ENCODE measurements at regions of chr12 and their contacts with region 1.

Region 1: DNA sequence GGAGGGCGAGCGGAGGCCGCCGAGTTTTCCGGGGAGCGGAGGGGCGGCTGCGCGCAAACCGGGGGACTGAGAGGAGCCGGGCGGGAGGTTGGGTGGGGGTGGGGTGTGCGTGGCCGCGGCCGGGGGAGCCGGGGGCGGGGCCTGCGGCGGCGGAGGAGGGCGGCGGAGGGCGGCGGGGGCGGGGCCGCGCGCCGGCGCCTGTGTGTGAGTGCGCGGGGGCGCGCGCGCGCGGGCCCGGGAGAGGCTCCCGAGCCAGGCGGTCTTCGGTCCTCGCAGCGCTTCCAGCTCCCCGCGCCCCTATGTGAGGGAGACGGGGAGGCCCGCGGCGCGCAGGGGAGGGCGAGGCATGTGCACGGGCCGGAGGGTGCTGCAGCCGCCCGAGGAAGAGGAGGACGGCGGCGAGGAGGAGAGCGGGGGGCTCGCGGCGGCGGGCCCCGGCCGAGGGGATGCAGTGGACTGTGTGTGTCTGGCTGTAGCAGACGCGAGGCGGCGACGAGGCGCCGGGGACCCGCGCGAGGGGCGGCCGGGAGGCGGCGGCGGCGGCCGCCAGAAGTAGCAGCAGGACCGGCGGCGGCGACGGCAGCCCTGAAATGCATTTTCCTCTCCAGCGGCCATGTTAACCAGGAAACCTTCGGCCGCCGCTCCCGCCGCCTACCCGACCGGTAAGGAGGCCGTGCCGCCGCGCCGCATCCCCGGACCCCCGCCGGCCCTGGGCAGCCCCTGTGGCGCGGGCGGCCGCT is at the start of gene DYRK2:
- DNase-seq: peak; percentile 86 to 90
- ATAC-seq: peak; percentile 62 to 75 (median 72)
- H3K4me3 ChIP-seq: peak within 1 kb of the TSS; percentile 96
- H3K27ac ChIP-seq: peak within 1 kb of the TSS; percentile 99
- H3K4me1 ChIP-seq: peaks cover 27% of the 10 kb centered on the region
- H3K27me3 ChIP-seq: no peaks in the 10 kb centered on the region
- CTCF ChIP-seq: peak; percentile 16
- total RNA-seq, gene DYRK2: 11.0 to 46.4 (median 21.5) TPM

Region 2: DNA sequence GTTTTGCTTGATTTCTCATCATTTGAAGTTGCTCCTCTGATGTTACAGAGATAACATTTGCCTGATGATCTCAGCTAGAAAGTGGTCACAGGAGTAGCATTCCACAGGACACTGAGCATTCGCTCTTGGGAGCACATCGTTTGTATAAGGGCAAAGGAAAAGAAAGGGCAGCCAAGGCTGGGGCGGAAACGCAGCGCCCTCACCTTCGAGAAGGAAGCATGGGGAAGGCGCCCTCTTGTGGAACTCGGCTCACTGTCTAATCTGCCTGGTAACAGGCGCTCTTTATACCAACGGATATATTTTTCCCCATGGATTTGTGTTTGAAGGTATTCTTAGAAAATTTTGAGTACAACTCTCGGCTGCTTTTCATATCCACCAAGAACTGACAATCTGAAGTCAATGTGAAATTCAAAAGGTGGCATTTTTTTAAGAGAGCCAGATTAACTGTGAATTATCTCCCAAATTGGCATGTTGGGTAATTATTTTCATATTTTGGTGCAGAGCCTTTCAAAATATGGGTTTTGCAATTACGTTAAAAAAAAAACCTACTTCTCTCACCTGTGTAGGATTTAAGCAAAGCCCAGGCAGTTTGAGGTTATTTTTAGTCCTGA is 206.8 kb before region 1 on chr12:
- intact Hi-C with region 1: loop called (anchors 5 to 10 kb)
- DNase-seq: peak; percentile 87 to 92
- ATAC-seq: peak; percentile 95 to 98 (median 96)
- H3K4me3 ChIP-seq: peak overlapping the region; percentile 56
- H3K27ac ChIP-seq: peak overlapping the region; percentile 84
- H3K4me1 ChIP-seq: peaks cover 10% of the 10 kb centered on the region
- H3K27me3 ChIP-seq: no peaks in the 10 kb centered on the region
- CTCF ChIP-seq: peak; percentile 82

Region 3: DNA sequence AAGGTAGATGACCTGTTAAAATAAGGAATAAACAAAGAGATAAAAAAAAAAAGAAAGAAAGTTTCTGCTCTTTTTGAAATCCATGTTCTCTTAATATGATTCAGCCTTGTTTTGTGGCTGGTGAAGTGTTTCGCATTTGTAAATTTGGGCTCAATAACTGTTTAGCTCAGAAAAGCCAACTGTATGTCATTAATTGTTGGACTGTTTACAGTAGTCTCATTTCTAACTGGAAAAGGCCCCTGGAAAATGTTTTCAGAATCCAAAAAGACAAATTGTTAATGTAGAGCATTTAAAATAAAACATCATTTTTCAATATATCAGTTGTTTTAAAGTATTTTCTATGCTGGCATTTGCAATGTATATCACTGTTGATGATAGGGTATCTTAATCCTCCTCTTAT is 47.6 kb before region 1 on chr12:
- intact Hi-C with region 1: no loop called
- DNase-seq: no peak
- ATAC-seq: no peak
- H3K4me3 ChIP-seq: no peak overlapping the region
- H3K27ac ChIP-seq: no peak overlapping the region
- H3K4me1 ChIP-seq: no peaks in the 10 kb centered on the region
- H3K27me3 ChIP-seq: no peaks in the 10 kb centered on the region
- CTCF ChIP-seq: no peak

Region 4: DNA sequence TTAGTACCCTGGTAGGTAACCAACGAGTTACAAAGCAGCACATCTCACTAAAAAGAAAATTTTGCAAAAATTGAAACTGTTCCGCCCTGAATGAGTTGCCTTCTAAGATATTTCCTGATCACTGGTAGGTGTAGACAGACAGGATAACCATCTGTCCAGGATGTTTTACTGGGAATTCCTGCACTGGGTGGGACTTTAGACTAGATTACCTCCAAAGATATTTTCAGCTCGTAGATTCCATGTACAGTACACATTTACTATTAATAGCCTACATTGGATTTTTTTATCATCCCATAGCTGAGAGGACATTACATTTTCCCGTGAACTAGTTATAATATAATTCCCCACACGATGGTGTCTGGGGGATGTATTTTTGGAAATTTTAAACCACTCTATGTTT is 139.4 kb after region 1 on chr12:
- intact Hi-C with region 1: loop called (anchors 10 kb)
- DNase-seq: no peak
- ATAC-seq: peak; percentile 81 to 92 (median 88)
- H3K4me3 ChIP-seq: peak overlapping the region; percentile 19
- H3K27ac ChIP-seq: peak overlapping the region; percentile 79
- H3K4me1 ChIP-seq: peaks cover 58% of the 10 kb centered on the region
- H3K27me3 ChIP-seq: no peaks in the 10 kb centered on the region
- CTCF ChIP-seq: no peak

Region 5: DNA sequence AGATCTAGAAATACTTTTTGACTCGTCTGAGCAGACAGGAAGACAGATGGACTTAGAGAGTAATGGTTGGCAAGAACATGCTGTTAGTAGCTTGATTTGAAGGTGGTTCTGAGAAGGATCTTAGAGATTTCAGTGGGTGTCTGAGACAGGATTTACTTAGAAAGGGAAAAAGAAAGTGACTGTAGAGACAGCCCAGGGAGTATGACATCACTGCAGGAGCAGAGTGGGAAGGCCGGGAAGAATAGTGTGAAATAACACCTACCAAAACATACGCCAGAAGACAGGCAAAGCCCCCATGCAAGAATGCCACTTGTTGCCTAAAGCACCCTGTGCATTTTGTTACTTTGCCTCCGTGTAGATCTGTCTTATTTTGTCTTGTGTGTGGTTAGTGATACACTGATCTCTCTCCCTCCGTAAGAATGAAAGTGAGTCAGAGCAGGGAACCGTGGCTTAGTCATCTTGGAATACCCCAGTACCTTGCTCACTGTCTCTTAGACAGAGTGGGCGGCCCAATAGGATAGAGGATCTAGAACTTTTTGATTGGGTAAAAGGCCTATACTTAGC is 179.2 kb after region 1 on chr12:
- intact Hi-C with region 1: loop called in 1 of 2 experiments (anchors 5 kb)
- DNase-seq: peak in 1 of 2 donors; percentile 20
- ATAC-seq: peak; percentile 97 to 98 (median 98)
- H3K4me3 ChIP-seq: peak overlapping the region; percentile 62
- H3K27ac ChIP-seq: peak overlapping the region; percentile 95
- H3K4me1 ChIP-seq: peaks cover 24% of the 10 kb centered on the region
- H3K27me3 ChIP-seq: no peaks in the 10 kb centered on the region
- CTCF ChIP-seq: no peak

Region 6: GRCh38 chr12:67943226-67943892 is 294.7 kb after region 1 on chr12:
- intact Hi-C with region 1: loop called (anchors 2 to 5 kb)
- DNase-seq: no peak
- ATAC-seq: peak; percentile 64 to 85 (median 72)
- H3K4me3 ChIP-seq: no peak overlapping the region
- H3K27ac ChIP-seq: peak overlapping the region; percentile 75
- H3K4me1 ChIP-seq: peaks cover 36% of the 10 kb centered on the region
- H3K27me3 ChIP-seq: no peaks in the 10 kb centered on the region
- CTCF ChIP-seq: peak; percentile 77

Region 7: DNA sequence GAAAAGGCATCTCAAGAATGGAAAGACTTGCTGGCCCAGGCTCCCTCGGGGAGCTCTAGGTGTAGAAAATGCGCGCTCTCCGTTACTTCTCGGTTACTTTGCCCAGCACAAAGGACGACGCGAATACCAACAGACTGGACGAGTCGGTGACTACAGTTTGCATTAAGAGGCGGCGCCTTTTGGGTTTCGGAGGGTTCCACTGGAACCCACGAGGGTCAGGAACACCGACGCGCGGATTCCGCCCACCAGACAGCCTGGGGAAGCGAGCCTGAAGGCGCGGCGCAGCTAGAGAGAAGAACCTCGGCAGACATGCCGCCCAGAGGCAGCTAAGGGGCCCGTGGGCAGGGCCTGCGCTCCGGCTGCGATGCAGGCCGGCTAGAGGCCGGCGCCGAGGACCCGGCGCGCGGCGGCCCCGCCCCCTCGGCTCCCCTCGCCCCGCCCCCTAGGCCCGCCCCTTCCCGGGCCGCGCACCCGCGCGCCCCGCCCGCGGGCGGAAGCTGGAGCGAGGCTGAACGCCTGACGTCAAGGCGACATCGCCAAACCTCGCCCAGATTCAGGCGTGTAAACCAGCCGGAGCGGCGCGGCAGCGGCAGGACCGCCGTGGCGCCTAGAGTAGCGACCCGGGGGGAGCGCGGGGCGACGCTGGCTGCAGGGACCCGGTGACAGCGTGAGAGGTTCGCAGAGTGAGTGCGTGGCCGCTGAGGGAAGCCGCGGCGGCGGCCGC is 961.8 kb after region 1 on chr12 and contains the start of gene RAP1B:
- intact Hi-C with region 1: no loop called
- DNase-seq: peak; percentile 88 to 96
- ATAC-seq: peak; percentile 94 to 97 (median 96)
- H3K4me3 ChIP-seq: peak within 1 kb of the TSS; percentile 93
- H3K27ac ChIP-seq: peak within 1 kb of the TSS; percentile 98
- H3K4me1 ChIP-seq: peaks cover 38% of the 10 kb centered on the region
- H3K27me3 ChIP-seq: no peaks in the 10 kb centered on the region
- CTCF ChIP-seq: no peak
- total RNA-seq, gene RAP1B: 36.2 to 65.6 (median 54.1) TPM

Measured in psoas muscle (tissue), 8 donors.